ENCODE measurements at regions of chr22 and their contacts with region 1.

Region 1: DNA sequence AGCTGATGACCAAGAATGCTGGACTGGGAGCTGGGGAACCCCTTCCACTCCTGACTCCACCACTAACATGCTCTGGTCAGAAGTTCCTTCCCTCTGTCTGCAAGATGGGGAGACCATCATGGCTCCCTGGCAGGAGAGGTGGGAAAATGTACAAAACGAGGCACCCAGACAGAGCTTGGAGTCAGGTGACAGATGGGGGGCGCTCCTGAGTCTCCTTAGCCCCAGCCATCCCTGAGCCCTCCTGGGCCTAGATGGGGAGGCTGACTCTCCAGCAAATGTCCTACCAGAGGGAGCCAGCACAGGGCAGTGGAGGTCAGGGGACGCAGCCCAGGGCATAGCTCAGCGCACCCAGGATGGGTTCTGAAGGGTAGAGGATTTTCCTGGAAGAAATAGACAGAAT is 20.0 kb downstream of the KCNJ4 start:
- DNase-seq: peak in 1 of 2 experiments; percentile 77
- H3K4me3 ChIP-seq: no peak overlapping the region
- H3K27ac ChIP-seq: no peak overlapping the region
- H3K4me1 ChIP-seq: peaks cover 0 to 2% (median 0%) of the 10 kb centered on the region in 4 experiments; a peak in 4 of 7 replicates
- H3K27me3 ChIP-seq: no peaks in the 10 kb centered on the region
- CTCF ChIP-seq: peak; percentile 67 to 81 (median 74)
- EP300 ChIP-seq: no peak
- POLR2A ChIP-seq: no peak
- RAD21 ChIP-seq: peak; percentile 59 to 67

Region 2: GRCh38 chr22:38422611-38423511 is 12.1 kb before region 1 on chr22:
- CTCF ChIA-PET with region 1: interaction called, 28 read pairs
- POLR2A ChIA-PET with region 1: interaction called, 5 read pairs
- DNase-seq: no peak
- H3K4me3 ChIP-seq: peak overlapping the region in 1 of 4 experiments; percentile 8; a peak in 1 of 8 replicates
- H3K27ac ChIP-seq: no peak overlapping the region
- H3K4me1 ChIP-seq: peaks cover 3 to 21% (median 11%) of the 10 kb centered on the region in 4 experiments; a peak in 6 of 7 replicates
- H3K27me3 ChIP-seq: no peaks in the 10 kb centered on the region
- CTCF ChIP-seq: no peak
- EP300 ChIP-seq: no peak
- POLR2A ChIP-seq: no peak
- RAD21 ChIP-seq: no peak

Region 3: GRCh38 chr22:38452373-38453065 is 17.5 kb after region 1 on chr22:
- CTCF ChIA-PET with region 1: interaction called, 78 read pairs
- POLR2A ChIA-PET with region 1: interaction called, 14 read pairs
- DNase-seq: no peak
- H3K4me3 ChIP-seq: no peak overlapping the region
- H3K27ac ChIP-seq: no peak overlapping the region
- H3K4me1 ChIP-seq: peaks cover 0 to 18% (median 9%) of the 10 kb centered on the region in 4 experiments; a peak in 6 of 7 replicates
- H3K27me3 ChIP-seq: peaks cover 15 to 37% (median 30%) of the 10 kb centered on the region in 4 experiments
- CTCF ChIP-seq: no peak
- EP300 ChIP-seq: no peak
- POLR2A ChIP-seq: no peak
- RAD21 ChIP-seq: no peak

Region 4: GRCh38 chr22:38461414-38462081 is 26.5 kb after region 1 on chr22:
- CTCF ChIA-PET with region 1: interaction called, 21 read pairs
- POLR2A ChIA-PET with region 1: interaction called, 3 read pairs
- DNase-seq: peak; percentile 69 to 98
- H3K4me3 ChIP-seq: peak overlapping the region in 2 of 4 experiments; percentile 19 to 49; a peak in 3 of 8 replicates
- H3K27ac ChIP-seq: no peak overlapping the region
- H3K4me1 ChIP-seq: peaks cover 0 to 16% (median 8%) of the 10 kb centered on the region in 4 experiments; a peak in 6 of 7 replicates
- H3K27me3 ChIP-seq: peaks cover 0 to 38% (median 29%) of the 10 kb centered on the region in 4 experiments; a peak in 6 of 7 replicates
- CTCF ChIP-seq: no peak
- EP300 ChIP-seq: peak in 1 of 2 experiments; percentile 84; a peak in 1 of 3 replicates
- POLR2A ChIP-seq: no peak
- RAD21 ChIP-seq: no peak; a peak in 1 of 4 replicates

Measured in H1 (cell line).